ENCODE measurements at regions of chr16 and their contacts with region 1.

Region 1: GRCh38 chr16:29862884-29863668 is at the start of gene CDIPT:
- DNase-seq: peak; percentile 95
- H3K4me3 ChIP-seq: peak within 1 kb of the TSS; percentile 89
- H3K27ac ChIP-seq: peak within 1 kb of the TSS; percentile 86
- H3K4me1 ChIP-seq: peaks cover 8% of the 10 kb centered on the region
- H3K27me3 ChIP-seq: no peaks in the 10 kb centered on the region
- CTCF ChIP-seq: peak; percentile 37
- total RNA-seq, gene CDIPT: 58.1 to 62.7 TPM

Region 2: DNA sequence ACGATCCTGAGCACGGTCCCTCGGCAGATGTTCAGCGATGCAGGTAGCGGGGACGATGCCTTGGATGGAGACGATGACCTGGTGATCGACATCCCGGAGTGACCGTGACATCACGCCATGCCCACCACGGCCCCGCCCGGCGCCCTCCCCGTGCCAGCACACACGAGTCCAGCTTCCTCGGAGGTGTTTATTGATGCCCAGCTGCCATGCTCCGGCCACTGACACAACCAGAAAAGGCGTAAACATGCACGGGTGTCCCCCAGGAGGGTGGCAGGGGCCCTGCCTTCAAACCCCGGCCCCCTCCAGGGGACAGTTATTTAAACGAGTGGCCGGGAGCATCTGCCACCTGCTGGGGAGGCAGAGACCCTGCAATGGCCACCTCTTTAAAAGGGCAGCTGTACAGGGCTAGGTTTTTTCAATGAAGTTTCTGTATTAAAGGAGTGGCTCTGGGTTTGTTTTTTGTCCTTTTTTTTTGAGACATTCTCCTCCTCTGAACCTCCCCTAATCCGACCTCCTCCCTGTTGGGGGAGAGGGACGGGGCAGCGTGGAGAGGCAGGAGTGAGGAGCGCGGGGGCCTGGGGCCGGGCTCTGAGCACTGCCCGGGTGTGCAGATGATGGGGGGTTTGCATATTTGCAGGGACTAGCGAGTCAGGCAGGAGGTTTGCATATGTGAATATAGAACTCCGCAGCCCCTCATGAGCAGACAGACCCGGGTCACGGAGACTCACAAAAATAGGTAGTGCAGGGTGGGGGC is 142.4 kb after region 1 on chr16:
- intact Hi-C with region 1: loop called (anchors 5 kb)
- DNase-seq: no peak
- H3K4me3 ChIP-seq: no peak overlapping the region
- H3K27ac ChIP-seq: no peak overlapping the region
- H3K4me1 ChIP-seq: peaks cover 4% of the 10 kb centered on the region
- H3K27me3 ChIP-seq: peaks cover 6% of the 10 kb centered on the region
- CTCF ChIP-seq: peak; percentile 81

Region 3: DNA sequence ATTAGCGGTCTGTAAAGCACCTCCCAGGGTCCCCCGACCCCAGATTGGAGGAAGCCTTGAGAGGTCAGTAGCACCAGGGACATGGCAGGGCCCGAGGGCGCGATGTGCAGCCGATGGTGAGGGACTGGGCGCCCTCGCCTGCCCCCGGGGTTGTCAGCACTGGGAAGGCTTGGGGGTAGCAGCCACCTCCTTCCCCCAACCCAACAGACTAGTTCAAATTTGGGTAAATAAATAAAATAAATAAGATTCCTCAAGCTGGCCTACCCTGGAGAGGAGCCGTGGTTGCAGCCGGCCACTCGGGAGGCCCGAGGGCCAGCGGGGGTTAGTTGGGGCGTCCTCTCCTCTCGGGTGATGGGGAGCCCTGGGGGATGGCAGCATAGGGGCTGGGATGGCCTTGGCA is 161.4 kb after region 1 on chr16:
- intact Hi-C with region 1: loop called (anchors 5 kb)
- DNase-seq: no peak
- H3K4me3 ChIP-seq: no peak overlapping the region
- H3K27ac ChIP-seq: no peak overlapping the region
- H3K4me1 ChIP-seq: no peaks in the 10 kb centered on the region
- H3K27me3 ChIP-seq: peaks cover 3% of the 10 kb centered on the region
- CTCF ChIP-seq: no peak